Thyroid gland (tissue), 4 donors: ENCODE measurements at regions of chr2 and their contacts with region 1.

Region 1: GRCh38 chr2:27095745-27096651 is 9.4 kb downstream of the KHK start:
- DNase-seq: peak; percentile 49 to 51
- H3K4me3 ChIP-seq: no peak overlapping the region
- H3K27ac ChIP-seq: no peak overlapping the region
- H3K4me1 ChIP-seq: peaks cover 5 to 21% of the 10 kb centered on the region in 2 donors
- H3K27me3 ChIP-seq: no peaks in the 10 kb centered on the region
- CTCF ChIP-seq: no peak
- POLR2A ChIP-seq: no peak

Region 2: GRCh38 chr2:26838121-26838906 is 257.7 kb before region 1 on chr2:
- intact Hi-C with region 1: no loop called
- DNase-seq: no peak
- H3K4me3 ChIP-seq: no peak overlapping the region
- H3K27ac ChIP-seq: no peak overlapping the region
- H3K4me1 ChIP-seq: no peaks in the 10 kb centered on the region
- H3K27me3 ChIP-seq: no peaks in the 10 kb centered on the region
- CTCF ChIP-seq: no peak
- POLR2A ChIP-seq: no peak

Region 3: DNA sequence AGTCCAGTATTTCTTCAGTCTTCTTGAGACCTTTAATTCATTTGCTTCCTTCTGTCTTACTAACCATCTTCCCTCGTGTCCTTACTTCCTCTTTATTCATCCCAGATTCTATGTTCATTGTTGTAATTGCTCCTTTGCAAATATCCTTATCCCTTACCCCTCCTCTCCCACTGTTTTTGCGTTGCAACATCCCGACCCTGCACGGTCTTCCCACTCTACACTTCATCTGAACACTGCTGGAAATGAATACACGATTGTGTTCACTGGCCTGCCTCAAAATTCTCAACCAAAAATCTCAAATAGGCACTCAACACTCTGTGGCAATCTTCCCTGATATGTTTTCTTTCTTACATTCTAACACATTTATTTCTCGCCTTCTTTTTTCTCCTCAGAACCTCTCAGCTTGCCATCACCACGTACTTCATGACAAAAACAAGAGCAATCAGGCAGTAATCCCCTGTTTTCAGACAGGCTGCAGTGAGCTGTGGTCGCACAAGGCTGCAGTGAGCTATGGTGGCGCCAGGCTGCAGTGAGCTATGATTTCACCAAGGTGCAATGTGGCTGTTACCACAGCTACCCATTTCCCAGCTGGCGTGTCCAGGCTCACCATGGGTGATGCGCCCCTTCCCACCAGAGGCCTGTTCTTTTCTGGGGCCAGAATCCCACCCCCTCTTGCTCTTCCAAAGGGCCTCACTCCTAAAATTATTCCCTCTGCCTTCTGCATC is 78.5 kb after region 1 on chr2:
- intact Hi-C with region 1: no loop called
- DNase-seq: no peak
- H3K4me3 ChIP-seq: no peak overlapping the region
- H3K27ac ChIP-seq: no peak overlapping the region
- H3K4me1 ChIP-seq: peaks cover 0 to 14% of the 10 kb centered on the region in 2 donors
- H3K27me3 ChIP-seq: no peaks in the 10 kb centered on the region
- CTCF ChIP-seq: no peak
- POLR2A ChIP-seq: no peak

Region 4: DNA sequence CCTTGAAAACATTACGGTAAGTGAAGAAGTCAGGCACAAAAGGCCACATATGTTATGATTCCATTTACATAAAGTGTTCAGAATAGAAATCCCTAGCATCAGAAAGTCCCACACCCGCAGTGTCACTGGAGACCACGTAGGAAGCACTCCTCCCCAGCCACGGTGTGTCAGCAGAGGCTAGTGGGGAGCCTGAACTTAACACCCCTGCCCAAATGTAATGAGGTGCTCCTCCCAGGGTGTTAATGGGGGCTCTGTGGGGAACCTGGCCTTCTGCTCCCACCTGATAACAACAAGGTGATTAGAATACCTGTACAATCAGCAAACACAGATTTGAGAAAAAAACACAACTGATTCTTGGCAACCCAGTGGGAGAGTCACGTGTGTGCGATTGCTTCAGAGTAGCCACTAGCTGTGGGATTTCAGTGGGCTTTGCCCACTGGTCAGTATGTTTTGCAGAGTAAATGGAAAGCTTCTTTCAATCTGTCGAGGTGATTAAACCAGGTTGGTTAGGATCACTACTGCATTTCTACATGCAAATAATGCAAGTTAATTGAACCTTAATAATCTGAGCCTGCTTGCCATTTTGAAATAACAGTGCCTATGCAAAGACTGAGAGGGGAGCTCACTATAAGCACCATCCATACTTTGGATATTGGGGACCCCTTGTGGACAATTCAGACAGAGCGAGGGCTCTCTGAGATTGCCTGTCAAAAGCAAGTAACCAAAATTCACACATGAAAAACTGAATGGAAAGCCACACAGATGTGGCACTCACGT is 95.2 kb after region 1 on chr2:
- intact Hi-C with region 1: loop called (anchors 5 kb)
- DNase-seq: peak; percentile 43 to 48
- H3K4me3 ChIP-seq: no peak overlapping the region
- H3K27ac ChIP-seq: no peak overlapping the region
- H3K4me1 ChIP-seq: no peaks in the 10 kb centered on the region
- H3K27me3 ChIP-seq: no peaks in the 10 kb centered on the region
- CTCF ChIP-seq: peak in 4 of 6 experiments; percentile 45 to 62 (median 52)
- POLR2A ChIP-seq: no peak

Region 5: GRCh38 chr2:27255660-27256059 is 159.7 kb after region 1 on chr2:
- intact Hi-C with region 1: no loop called
- DNase-seq: no peak
- H3K4me3 ChIP-seq: no peak overlapping the region
- H3K27ac ChIP-seq: no peak overlapping the region
- H3K4me1 ChIP-seq: no peaks in the 10 kb centered on the region
- H3K27me3 ChIP-seq: no peaks in the 10 kb centered on the region
- CTCF ChIP-seq: no peak
- POLR2A ChIP-seq: no peak

Region 6: DNA sequence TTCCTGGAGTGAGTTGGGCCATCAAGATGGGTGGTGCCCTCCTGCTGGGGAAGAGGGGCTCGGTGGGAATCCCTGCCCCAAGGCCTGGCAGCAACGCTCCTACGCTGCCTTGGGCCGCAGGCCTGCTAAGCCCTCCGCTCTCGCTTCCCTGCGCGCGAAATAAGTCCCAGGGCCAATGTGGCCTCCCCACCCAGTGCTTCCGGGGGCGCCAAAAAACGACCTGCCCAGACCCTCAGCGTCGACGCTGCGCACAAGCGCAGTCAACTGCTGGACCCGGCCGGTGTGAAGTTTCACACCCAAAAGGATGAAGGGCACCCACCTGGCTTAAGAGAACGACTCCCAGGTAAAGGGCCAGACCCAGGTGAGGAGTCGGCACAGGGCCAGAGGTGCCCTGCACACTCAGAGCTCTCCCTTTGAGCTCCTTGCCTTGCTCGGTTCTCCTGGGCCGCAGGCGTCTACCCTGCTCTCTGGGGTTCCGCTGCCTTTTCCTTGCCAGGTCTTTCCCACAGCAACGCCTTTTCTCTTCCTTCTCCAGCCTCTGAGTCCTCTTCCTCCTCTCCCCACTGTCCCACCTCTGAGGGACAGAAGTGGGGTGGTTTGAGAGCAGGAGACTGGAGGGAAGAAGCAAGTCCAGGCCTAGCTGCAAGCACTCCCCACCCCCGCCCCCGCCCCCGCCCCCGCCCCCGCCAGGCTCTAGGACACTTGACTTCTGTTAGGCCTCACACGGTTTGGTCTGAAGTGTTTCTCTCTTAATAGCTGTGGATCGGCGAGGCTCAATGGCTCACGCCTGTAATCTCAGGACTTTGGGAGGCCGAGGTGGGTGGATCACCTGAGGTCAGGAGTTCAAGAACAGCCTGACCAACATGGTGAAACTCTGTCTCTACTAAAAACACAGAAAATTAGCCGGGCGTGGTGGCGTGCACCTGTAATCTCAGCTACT is 179.5 kb after region 1 on chr2 and contains the start of gene DNAJC5G:
- intact Hi-C with region 1: loop called (anchors 5 kb)
- DNase-seq: peak in 1 of 2 donors; percentile 46
- H3K4me3 ChIP-seq: no peak within 1 kb of the TSS
- H3K27ac ChIP-seq: no peak within 1 kb of the TSS
- H3K4me1 ChIP-seq: peaks cover 0 to 8% of the 10 kb centered on the region in 2 donors
- H3K27me3 ChIP-seq: no peaks in the 10 kb centered on the region
- CTCF ChIP-seq: no peak
- POLR2A ChIP-seq: no peak
- total RNA-seq, gene DNAJC5G: 0.33 to 2.1 (median 1.1) TPM in 3 of 4 donors, not detected in the other

Region 7: DNA sequence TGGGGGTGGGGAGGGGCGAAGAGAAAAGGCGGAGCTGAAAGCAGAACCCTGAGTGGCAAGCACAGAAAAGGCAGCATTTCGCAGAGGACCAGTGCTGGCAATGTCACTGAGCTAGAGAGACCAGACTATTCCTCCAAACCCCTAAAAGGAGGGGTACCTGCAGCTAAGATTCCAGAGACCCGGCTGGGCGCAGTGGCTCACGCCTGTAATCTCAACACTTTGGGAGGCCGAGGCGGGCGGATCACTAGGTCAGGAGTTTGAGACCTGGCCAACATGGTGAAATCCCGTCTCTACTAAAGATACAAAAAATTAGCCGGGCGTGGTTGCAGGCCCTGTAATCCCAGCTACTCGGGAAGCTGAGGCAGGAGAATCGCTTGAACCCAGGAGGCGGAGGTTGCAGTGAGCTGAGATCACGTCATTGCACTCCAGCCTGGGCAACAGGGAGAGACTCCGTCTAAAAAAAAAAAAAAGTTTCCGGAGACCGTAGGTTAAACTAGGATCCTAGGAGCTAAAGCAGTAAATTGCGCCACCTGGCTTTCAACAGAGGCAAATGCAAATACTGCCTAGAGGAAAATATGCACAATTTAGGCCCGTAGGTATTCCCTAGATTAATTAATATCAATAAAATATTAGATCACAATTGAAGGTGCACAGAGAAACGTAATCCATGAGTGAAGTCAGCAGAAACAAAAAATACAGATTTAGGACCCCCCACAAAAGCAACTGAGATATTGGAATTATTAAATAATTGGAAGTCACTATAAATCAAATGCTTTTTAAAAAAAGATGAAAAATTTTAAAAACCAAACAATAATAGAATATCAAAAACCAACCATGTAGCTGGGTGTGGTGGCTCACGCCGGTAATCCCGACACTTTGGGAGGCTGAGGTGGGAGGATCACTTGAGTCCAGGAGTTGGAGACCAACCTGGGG is 207.4 kb after region 1 on chr2:
- intact Hi-C with region 1: loop called (anchors 10 kb)
- DNase-seq: peak; percentile 52 to 53
- H3K4me3 ChIP-seq: no peak overlapping the region
- H3K27ac ChIP-seq: no peak overlapping the region
- H3K4me1 ChIP-seq: peaks cover 5 to 23% of the 10 kb centered on the region in 2 donors
- H3K27me3 ChIP-seq: peaks cover 18% of the 10 kb centered on the region
- CTCF ChIP-seq: peak; percentile 59 to 94 (median 86)
- POLR2A ChIP-seq: no peak